ENCODE measurements at regions of chr6 and their contacts with region 1.

Region 1: GRCh38 chr6:42745707-42746462 is at the start of gene TBCC:
- DNase-seq: peak; percentile 98 to 100
- H3K4me3 ChIP-seq: peak within 1 kb of the TSS; percentile 87 to 97
- H3K27ac ChIP-seq: peak within 1 kb of the TSS; percentile 98
- H3K4me1 ChIP-seq: peaks cover 50% of the 10 kb centered on the region
- H3K27me3 ChIP-seq: no peaks in the 10 kb centered on the region
- CTCF ChIP-seq: no peak
- POLR2A ChIP-seq: peak in 1 of 2 donors; percentile 91
- total RNA-seq, gene TBCC: 16.7 TPM

Region 2: GRCh38 chr6:42782622-42783176 is 36.8 kb after region 1 on chr6:
- intact Hi-C with region 1: loop called (anchors 2 kb)
- DNase-seq: no peak
- H3K4me3 ChIP-seq: peak overlapping the region; percentile 72 to 96
- H3K27ac ChIP-seq: peak overlapping the region; percentile 100
- H3K4me1 ChIP-seq: peaks cover 41% of the 10 kb centered on the region
- H3K27me3 ChIP-seq: no peaks in the 10 kb centered on the region
- CTCF ChIP-seq: no peak
- POLR2A ChIP-seq: peak in 1 of 2 donors; percentile 39

Region 3: DNA sequence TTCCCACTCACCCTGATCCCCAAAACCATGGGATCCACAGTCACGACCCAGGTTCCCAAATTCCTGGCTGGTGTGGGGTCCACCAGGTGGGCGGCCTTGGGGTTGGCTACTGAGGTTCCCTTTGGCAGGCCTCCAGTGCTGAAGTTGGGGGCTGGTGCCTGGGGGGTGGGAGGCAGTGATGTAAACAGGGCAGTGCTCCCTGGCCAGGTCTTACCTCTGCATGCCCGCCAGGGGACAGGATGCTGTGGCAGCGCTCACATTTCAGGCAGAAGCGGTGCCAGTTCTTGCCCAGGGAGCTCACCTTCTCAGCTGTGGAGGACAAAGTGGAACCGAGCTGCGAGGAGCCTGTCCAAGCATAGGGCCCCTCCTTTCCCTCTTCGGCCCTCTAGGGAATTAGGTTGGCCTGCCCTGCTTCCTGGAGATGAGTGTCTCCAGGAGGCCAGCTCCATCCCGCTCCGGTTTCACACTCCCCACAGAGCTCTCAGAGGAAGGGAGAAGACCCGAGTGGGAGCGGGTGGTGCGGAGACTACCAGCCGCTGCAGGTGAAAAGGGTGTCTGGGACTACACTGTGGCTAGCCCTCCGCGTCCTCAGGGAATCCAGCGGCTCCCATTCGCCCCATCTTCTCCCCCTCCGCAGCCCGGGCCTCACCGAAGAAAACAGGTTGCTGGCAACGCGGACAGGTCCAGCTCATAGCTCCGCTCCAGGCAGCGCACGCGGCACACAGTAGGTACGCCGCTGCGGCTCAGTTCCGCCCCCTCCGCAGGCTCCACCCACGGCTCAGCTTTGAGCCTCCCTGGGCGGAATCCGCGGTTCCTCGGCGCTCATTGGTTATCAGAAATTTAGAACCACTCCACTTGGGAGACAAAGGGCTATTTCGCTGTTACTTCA is 562.5 kb after region 1 on chr6 and contains the start of gene CRIP3:
- intact Hi-C with region 1: no loop called
- DNase-seq: no peak
- H3K4me3 ChIP-seq: peak within 1 kb of the TSS; percentile 36 to 44
- H3K27ac ChIP-seq: no peak within 1 kb of the TSS
- H3K4me1 ChIP-seq: peaks cover 14% of the 10 kb centered on the region
- H3K27me3 ChIP-seq: no peaks in the 10 kb centered on the region
- CTCF ChIP-seq: no peak
- POLR2A ChIP-seq: no peak
- total RNA-seq, gene CRIP3: not detected

Region 4: DNA sequence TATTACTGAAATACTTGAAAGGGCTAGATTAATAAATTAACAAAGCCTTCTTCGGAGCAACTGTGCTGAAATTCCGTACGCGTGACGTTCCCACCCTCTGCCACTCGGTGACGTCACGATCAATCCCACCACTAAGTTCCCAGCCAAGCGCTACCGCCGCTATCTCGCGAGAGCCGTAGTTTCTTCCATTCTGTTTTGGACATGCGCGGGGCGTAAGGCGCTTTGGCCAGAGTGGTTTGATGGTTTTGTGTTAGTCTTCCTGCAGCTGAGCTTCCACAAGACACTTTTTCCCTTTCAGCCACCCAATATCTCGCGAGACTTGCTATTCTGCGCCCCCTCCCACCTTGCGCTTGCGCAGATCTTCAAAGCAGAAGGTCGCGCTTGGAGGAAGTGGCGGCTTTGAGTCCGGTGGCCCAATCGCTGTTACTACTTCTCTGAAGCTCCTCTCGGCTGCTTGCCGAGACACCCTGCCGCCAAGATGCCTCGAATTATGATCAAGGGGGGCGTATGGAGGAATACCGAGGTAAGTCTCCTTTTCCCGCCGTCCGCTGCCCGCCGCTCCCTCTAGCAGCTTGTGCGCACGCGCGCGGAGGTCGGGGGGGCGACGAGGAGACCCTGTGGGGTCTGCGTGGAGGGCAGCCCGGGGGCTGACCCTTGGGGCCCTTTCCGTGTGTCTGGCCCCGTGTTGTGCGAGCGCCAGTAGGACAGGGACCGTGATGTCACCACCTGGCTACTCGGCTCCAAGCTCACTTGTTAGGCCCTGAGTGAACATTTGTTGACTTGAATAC is 1641.7 kb after region 1 on chr6 and contains the start of gene CDC5L:
- intact Hi-C with region 1: no loop called
- DNase-seq: peak in 1 of 2 donors; percentile 99
- H3K4me3 ChIP-seq: peak within 1 kb of the TSS; percentile 81 to 98
- H3K27ac ChIP-seq: peak within 1 kb of the TSS; percentile 98
- H3K4me1 ChIP-seq: peaks cover 29% of the 10 kb centered on the region
- H3K27me3 ChIP-seq: no peaks in the 10 kb centered on the region
- CTCF ChIP-seq: no peak
- POLR2A ChIP-seq: peak in 1 of 2 donors; percentile 61
- total RNA-seq, gene CDC5L: 16.5 TPM